Left cardiac atrium (tissue), 4 donors: ENCODE measurements at regions of chr11 and their contacts with region 1.

Region 1: GRCh38 chr11:129364143-129364654 is 11.4 kb upstream of the BARX2 start:
- DNase-seq: peak; percentile 84
- ATAC-seq: peak; percentile 91 to 99

Region 2: GRCh38 chr11:129743111-129743815 is 379.1 kb after region 1 on chr11:
- intact Hi-C with region 1: loop called in 1 of 2 experiments (anchors 10 kb)
- DNase-seq: peak; percentile 22
- ATAC-seq: peak in 1 of 2 donors; percentile 59

Region 3: GRCh38 chr11:129750349-129751292 is 386.4 kb after region 1 on chr11:
- intact Hi-C with region 1: loop called (anchors 5 to 10 kb)
- DNase-seq: peak; percentile 74
- ATAC-seq: peak; percentile 95 to 96